ENCODE measurements at regions of chr3 and their contacts with region 1.

Region 1: GRCh38 chr3:89280822-89281365 is 173.5 kb downstream of the EPHA3 start:
- DNase-seq: no peak
- H3K4me3 ChIP-seq: no peak overlapping the region
- H3K27ac ChIP-seq: no peak overlapping the region
- H3K4me1 ChIP-seq: no peaks in the 10 kb centered on the region
- CTCF ChIP-seq: no peak

Region 2: GRCh38 chr3:89260721-89261120 is 20.2 kb before region 1 on chr3:
- CTCF ChIA-PET with region 1: no interaction called
- POLR2A ChIA-PET with region 1: no interaction called
- intact Hi-C with region 1: loop called (anchors 1 kb)
- DNase-seq: no peak
- H3K4me3 ChIP-seq: no peak overlapping the region
- H3K27ac ChIP-seq: no peak overlapping the region
- H3K4me1 ChIP-seq: no peaks in the 10 kb centered on the region
- CTCF ChIP-seq: no peak

Region 3: GRCh38 chr3:89320186-89320585 is 39.3 kb after region 1 on chr3:
- CTCF ChIA-PET with region 1: no interaction called
- POLR2A ChIA-PET with region 1: no interaction called
- intact Hi-C with region 1: no loop called
- DNase-seq: no peak
- H3K4me3 ChIP-seq: no peak overlapping the region
- H3K27ac ChIP-seq: no peak overlapping the region
- H3K4me1 ChIP-seq: no peaks in the 10 kb centered on the region
- CTCF ChIP-seq: no peak

Measured in OCI-LY7 (cell line).